Dorsolateral prefrontal cortex (tissue), 120 donors: ENCODE measurements at regions of chr14 and their contacts with region 1.

Region 1: GRCh38 chr14:55051426-55052268 is at the start of gene MAPK1IP1L:
- DNase-seq: peak; percentile 66 to 93 (median 86)
- H3K4me3 ChIP-seq: peak within 1 kb of the TSS; percentile 66 to 100 (median 94)
- H3K27ac ChIP-seq: peak within 1 kb of the TSS; percentile 82 to 100 (median 98)
- H3K27me3 ChIP-seq: no peaks in the 10 kb centered on the region
- CTCF ChIP-seq: peak; percentile 20 to 100 (median 99)
- total RNA-seq, gene MAPK1IP1L: 35.7 to 78.9 (median 53.0) TPM

Region 2: DNA sequence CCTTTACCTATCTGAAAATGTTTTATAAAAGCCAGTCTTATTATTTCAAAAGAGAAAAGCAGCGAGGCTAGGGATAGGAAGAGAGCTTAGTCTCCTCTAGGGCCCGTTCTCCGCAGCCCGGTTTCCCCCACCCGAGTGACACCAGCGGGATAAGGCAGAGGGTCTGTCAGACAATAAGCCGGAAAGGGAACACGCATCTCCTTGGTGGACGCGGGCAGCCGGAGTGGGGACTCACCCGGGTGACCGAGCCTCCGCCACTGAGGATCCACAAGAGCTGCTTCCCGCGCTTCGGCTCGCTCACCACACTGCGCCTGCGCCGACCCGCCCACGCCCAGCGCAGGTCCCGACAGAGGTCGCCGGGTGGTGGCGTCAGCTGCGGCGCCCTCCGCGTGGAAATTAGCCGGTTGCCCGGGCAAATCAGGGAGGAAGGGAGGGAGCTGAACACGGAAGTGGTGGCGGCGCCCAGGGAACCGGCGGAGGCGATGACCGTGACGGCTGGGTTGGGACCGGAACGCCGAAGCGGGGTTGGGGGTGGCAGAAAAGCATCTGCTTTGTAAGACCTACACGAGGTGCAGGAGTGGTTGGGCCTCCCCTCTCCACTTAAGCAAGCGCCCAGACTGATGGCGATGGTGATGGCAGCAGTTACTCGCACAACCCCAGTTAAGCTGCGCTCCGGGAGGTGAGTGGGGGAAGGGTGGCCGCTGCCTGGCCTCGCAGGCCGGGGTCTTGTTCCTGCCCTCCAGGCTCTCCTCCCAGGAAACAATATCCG is 24.7 kb before region 1 on chr14 and contains the starts of genes SOCS4 and WDHD1:
- intact Hi-C with region 1: loop called (anchors 1 to 2 kb)
- DNase-seq: peak; percentile 91 to 98 (median 95)
- H3K4me3 ChIP-seq: peak within 1 kb of the TSS; percentile 57 to 98 (median 86)
- H3K27ac ChIP-seq: peak within 1 kb of the TSS in 58 of 59 donors; percentile 2 to 92 (median 80)
- H3K27me3 ChIP-seq: no peaks in the 10 kb centered on the region
- CTCF ChIP-seq: peak in 55 of 56 donors; percentile 23 to 83 (median 55)
- total RNA-seq, gene SOCS4: 17.2 to 44.5 (median 26.0) TPM
- total RNA-seq, gene WDHD1: 2.1 to 8.9 (median 5.0) TPM

Region 3: DNA sequence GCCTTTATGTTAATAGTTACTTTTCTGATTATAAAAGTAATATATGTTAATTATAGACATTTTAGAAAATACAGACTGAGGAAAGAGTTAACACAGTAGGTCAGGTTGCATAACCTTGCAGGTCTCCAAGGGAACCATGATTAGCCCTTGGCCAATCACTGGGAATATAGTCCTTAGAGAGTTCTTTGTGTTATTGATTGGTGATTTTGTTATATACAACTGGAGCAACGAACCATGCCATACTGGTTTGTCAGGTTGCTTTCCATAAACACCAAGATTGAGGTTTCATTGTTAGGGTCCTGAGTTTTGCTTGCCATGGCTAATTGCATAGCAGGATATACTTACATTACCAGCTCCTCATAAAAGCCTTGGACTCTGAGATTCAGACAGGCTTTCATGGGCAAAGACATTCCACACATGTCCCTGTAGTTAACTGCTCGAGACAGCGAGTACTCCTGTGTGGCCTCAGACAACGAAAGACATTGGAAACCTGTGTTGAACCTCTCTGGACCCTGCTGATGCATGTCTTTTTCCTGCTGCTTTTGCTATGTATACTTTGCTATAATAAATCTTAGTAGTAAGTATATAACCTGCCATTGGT is 33.5 kb after region 1 on chr14:
- intact Hi-C with region 1: loop called in 1 of 2 experiments (anchors 5 kb)
- DNase-seq: no peak
- H3K4me3 ChIP-seq: no peak overlapping the region
- H3K27ac ChIP-seq: no peak overlapping the region
- H3K27me3 ChIP-seq: no peaks in the 10 kb centered on the region
- CTCF ChIP-seq: no peak